Naive thymus-derived CD4-positive, alpha-beta T cell (primary cell): ENCODE measurements at regions of chr2 and their contacts with region 1.

Region 1: DNA sequence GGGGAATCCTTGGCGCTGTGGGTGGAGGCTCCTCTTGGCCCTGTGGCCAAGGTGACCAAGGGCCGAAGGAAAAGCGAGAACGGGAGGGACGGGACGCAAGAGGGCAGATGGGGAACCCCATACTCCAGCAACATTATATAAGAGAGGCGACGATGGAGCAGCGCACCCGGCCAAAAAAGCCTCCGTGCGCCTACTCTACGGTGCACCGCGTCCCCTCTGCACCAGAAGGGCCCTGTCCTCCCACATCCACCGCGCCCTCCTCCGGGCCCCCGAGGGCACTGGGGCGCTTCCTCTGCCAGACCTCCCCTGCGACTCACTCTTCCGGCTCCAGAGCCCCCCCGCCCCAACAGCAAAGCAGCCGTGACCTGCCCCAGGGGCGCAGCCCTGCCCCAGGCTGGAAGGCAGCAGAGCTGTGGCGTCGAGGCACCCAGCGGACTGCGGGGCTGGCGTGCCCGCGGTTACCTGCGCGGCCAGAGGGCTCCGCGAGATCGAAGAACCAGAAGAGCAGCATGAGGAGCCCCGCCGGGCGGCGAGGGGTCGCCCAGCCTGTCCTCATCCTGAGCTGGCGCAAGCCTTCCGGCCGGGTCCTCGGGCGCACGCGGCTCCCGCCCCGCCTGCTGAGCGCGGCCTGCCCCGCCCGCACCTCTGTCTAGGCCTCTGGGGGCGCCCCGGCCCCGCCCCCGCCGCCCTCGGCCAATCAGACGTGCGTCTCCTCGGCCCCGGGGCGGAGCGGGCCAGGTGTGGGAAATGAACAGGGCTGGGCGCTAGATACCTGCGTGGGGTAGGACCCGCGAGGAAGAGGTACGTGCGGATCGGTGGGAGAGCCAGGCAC is 106.3 kb upstream of the CD302 start:
- DNase-seq: peak; percentile 70 to 85 (median 83)
- ATAC-seq: peak; percentile 91
- H3K4me3 ChIP-seq: peak within 1 kb of the TSS; percentile 95
- H3K4me3 Mint-ChIP-seq: peak within 1 kb of the TSS; percentile 93 to 100 (median 98)
- H3K27ac ChIP-seq: peak within 1 kb of the TSS; percentile 87
- H3K27ac Mint-ChIP-seq: peak within 1 kb of the TSS; percentile 96 to 100 (median 98)
- H3K4me1 ChIP-seq: peaks cover 3 to 8% of the 10 kb centered on the region in 2 donors
- H3K4me1 Mint-ChIP-seq: peaks cover 24 to 52% (median 41%) of the 10 kb centered on the region in 7 donors
- H3K27me3 ChIP-seq: no peaks in the 10 kb centered on the region
- H3K27me3 Mint-ChIP-seq: peaks cover 0 to 3% (median 0%) of the 10 kb centered on the region in 5 donors

Region 2: DNA sequence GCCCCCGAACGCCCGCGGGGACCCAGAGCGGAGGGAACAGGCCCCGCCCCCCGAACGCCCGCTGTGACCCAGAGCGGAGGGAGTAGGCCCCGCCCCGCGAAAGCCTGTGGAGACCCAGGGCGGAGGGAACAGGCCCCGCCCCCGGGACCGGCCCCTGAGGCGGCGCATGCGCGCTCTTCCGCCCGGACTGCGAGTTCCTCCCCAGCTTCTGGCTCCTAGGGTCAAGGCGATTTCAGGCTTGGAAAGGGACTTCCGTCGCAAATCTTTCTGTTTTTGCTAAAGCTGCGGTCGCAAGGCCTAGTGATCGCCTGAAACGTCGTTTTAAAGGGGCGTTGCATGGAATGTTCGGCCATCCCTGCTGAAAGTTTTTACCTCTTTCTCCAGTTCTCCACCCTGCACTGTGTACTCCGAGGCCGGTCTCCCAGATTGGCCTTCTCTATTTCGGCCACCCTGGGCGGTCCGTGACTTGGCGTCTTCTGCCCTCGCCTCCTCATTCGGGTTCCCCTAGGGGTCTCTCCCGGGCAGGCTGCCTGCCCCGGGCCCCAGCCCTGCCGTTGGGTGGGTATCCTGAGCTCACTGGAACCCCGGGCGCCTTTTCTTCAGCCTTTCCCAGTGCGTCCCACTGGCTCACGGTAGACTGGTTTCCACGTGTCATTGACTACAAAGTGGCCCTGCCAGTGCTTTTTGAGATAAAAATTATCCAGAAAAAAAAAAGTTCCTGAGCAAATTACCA is 617.5 kb before region 1 on chr2:
- CTCF ChIA-PET with region 1: no interaction called
- POLR2A ChIA-PET with region 1: no interaction called
- intact Hi-C with region 1: loop called (anchors 1 kb)
- DNase-seq: peak; percentile 89 to 97 (median 94)
- ATAC-seq: peak; percentile 99
- H3K4me3 ChIP-seq: peak overlapping the region; percentile 72
- H3K4me3 Mint-ChIP-seq: peak overlapping the region; percentile 80 to 92 (median 89)
- H3K27ac ChIP-seq: peak overlapping the region; percentile 77
- H3K27ac Mint-ChIP-seq: peak overlapping the region; percentile 64 to 97 (median 85)
- H3K4me1 ChIP-seq: peaks cover 8 to 13% of the 10 kb centered on the region in 2 donors
- H3K4me1 Mint-ChIP-seq: peaks cover 15 to 36% (median 31%) of the 10 kb centered on the region in 7 donors
- H3K27me3 ChIP-seq: no peaks in the 10 kb centered on the region
- H3K27me3 Mint-ChIP-seq: no peaks in the 10 kb centered on the region

Region 3: DNA sequence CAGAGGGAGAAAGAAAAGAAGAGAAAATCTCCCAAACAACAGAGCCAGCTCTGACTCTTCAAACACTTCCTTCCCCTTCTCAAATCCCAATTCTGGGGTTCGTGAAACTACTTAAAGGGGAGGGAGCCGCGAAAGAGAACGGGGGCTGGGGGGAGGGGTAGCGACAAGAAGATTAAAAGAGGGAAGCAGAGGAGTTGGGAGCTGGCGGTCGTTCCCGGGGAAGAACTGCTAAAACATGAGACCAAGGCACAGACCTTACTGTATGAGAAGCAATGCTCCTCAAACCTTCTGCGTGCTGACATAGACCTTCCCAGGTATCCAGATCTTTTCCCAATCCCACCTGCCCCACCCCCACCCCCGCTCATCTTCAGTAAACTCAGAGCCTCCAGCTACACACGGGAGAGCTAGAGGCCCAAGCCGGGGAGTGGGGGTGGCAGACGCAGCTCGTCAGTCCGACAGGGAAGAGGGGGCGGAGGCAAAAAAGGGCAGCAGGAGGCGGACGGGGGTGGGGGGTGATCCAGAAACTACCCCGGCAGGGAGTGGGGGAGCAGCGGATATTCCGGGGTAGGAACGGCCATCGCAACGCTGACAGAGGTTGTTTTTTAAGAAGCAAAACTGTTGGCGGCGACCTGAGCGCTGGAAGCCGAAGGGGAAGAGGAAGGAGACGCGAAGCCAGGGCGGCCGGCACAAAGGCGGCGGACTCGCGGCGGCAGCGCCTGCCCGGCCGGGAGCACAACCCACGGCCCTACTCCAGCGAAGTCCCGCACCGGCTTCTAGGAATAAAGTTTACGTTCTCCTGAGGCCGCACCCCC is 289.0 kb before region 1 on chr2:
- CTCF ChIA-PET with region 1: no interaction called
- POLR2A ChIA-PET with region 1: no interaction called
- intact Hi-C with region 1: loop called in 1 of 2 experiments (anchors 10 kb)
- DNase-seq: peak in 8 of 9 donors; percentile 7 to 51 (median 22)
- ATAC-seq: peak; percentile 78
- H3K4me3 ChIP-seq: peak overlapping the region; percentile 58
- H3K4me3 Mint-ChIP-seq: peak overlapping the region; percentile 81 to 99 (median 89)
- H3K27ac ChIP-seq: peak overlapping the region; percentile 30
- H3K27ac Mint-ChIP-seq: peak overlapping the region in 2 of 9 donors; percentile 32 to 57
- H3K4me1 ChIP-seq: peaks cover 4 to 5% of the 10 kb centered on the region in 2 donors
- H3K4me1 Mint-ChIP-seq: peaks cover 10 to 18% (median 15%) of the 10 kb centered on the region in 7 donors
- H3K27me3 ChIP-seq: peaks cover 3% of the 10 kb centered on the region in 2 donors
- H3K27me3 Mint-ChIP-seq: peaks cover 17 to 50% (median 41%) of the 10 kb centered on the region in 5 donors

Region 4: DNA sequence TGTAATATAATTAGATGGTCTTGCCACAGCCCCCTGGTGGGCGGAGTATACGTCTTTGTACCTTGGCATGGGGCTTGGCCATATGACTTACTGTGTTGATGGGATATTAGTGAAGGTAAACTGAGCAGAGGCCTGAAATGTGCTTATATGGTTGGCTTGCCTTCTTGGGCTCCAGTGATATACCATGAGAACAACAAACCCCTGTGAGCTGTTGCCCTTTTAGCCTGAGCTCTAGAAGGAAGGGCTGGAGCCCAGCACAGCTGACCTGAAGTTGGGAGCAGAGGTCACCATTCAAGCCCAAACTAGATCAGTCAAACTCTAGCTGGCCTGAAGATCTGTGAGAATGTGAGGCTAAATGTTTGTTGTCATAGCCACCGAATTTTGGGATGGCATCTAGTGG is 31.1 kb before region 1 on chr2:
- CTCF ChIA-PET with region 1: no interaction called
- POLR2A ChIA-PET with region 1: no interaction called
- intact Hi-C with region 1: no loop called
- DNase-seq: peak in 3 of 9 donors; percentile 2 to 19 (median 9)
- ATAC-seq: no peak
- H3K4me3 ChIP-seq: no peak overlapping the region
- H3K4me3 Mint-ChIP-seq: no peak overlapping the region
- H3K27ac ChIP-seq: no peak overlapping the region
- H3K27ac Mint-ChIP-seq: peak overlapping the region in 2 of 9 donors; percentile 53 to 56
- H3K4me1 ChIP-seq: no peaks in the 10 kb centered on the region
- H3K4me1 Mint-ChIP-seq: no peaks in the 10 kb centered on the region
- H3K27me3 ChIP-seq: no peaks in the 10 kb centered on the region
- H3K27me3 Mint-ChIP-seq: no peaks in the 10 kb centered on the region

Region 5: DNA sequence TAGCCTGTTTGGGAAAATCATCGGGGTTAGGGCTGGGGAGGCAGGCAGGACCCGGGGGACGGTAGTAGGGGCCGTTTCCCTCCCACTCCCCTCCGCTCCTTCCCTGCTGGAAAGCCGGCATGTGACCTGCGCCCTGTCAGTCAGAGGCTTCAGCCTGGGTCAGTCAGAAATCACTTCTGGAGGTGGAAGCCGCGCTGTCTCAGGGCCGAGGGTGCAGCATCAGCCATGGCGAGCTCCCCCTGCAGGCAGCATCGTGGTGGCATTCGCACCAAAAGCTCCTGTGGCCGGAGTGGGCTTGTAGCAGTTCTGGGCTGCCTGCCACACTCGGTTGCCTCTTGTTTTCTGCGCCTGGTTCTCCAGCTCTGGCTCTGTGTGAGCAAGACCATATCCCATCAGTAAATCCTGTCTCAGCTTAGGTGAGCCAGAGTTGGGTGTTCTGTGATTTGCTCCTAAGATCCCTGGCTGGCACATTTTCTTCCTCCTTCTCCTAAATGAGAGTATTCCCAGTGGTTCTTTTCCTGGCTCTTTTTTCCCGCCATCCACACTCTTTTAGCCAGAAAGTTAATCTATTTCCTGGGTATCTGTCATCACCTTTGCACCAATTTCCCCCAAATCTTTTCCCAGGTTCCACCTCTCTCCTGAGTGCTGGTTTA is 17.5 kb after region 1 on chr2:
- CTCF ChIA-PET with region 1: interaction called, 18 read pairs
- POLR2A ChIA-PET with region 1: interaction called, 6 read pairs
- intact Hi-C with region 1: loop called in 1 of 2 experiments (anchors 1 kb)
- DNase-seq: peak; percentile 21 to 75 (median 56)
- ATAC-seq: peak; percentile 95
- H3K4me3 ChIP-seq: no peak overlapping the region
- H3K4me3 Mint-ChIP-seq: no peak overlapping the region
- H3K27ac ChIP-seq: no peak overlapping the region
- H3K27ac Mint-ChIP-seq: no peak overlapping the region
- H3K4me1 ChIP-seq: no peaks in the 10 kb centered on the region
- H3K4me1 Mint-ChIP-seq: peaks cover 0 to 7% (median 5%) of the 10 kb centered on the region in 7 donors
- H3K27me3 ChIP-seq: no peaks in the 10 kb centered on the region
- H3K27me3 Mint-ChIP-seq: peaks cover 3 to 38% (median 18%) of the 10 kb centered on the region in 5 donors

Region 6: DNA sequence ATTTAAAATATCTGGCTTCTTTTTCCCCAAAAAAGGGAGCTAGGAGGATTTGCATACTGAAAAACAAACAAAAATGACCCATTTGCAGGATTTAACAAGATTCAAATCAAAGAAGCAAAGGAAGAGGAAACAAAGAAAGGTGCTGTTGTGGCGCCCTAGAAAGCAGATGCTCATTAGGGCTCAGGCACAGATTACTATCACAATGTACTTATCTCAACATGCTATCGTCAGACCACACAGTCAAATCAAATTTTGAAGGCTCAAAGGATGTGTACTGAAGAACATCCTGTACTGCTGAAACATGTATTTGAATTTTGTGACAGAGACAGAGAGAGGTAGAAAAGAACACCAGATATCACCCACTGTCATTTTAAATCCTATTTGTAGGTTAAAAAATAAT is 578.3 kb after region 1 on chr2:
- CTCF ChIA-PET with region 1: no interaction called
- POLR2A ChIA-PET with region 1: no interaction called
- intact Hi-C with region 1: loop called in 1 of 2 experiments (anchors 10 kb)
- DNase-seq: peak in 7 of 9 donors; percentile 58 to 87 (median 78)
- ATAC-seq: peak; percentile 97
- H3K4me3 ChIP-seq: no peak overlapping the region
- H3K4me3 Mint-ChIP-seq: peak overlapping the region; percentile 45 to 81 (median 72)
- H3K27ac ChIP-seq: peak overlapping the region; percentile 70
- H3K27ac Mint-ChIP-seq: peak overlapping the region; percentile 73 to 97 (median 95)
- H3K4me1 ChIP-seq: peaks cover 18 to 66% of the 10 kb centered on the region in 2 donors
- H3K4me1 Mint-ChIP-seq: peaks cover 33 to 100% (median 85%) of the 10 kb centered on the region in 7 donors
- H3K27me3 ChIP-seq: no peaks in the 10 kb centered on the region
- H3K27me3 Mint-ChIP-seq: no peaks in the 10 kb centered on the region